ENCODE measurements at regions of chr10 and their contacts with region 1.

Region 1: GRCh38 chr10:22597138-22597537 is 117.2 kb downstream of the PIP4K2A start:
- DNase-seq: peak; percentile 74
- ATAC-seq: peak; percentile 67
- H3K4me3 ChIP-seq: no peak overlapping the region
- H3K4me3 Mint-ChIP-seq: peak overlapping the region; percentile 79
- H3K27ac ChIP-seq: peak overlapping the region; percentile 63 to 91
- H3K27ac Mint-ChIP-seq: peak overlapping the region; percentile 90
- H3K4me1 ChIP-seq: peaks cover 86% of the 10 kb centered on the region in 2 donors
- H3K4me1 Mint-ChIP-seq: peaks cover 85% of the 10 kb centered on the region
- H3K27me3 ChIP-seq: no peaks in the 10 kb centered on the region
- H3K27me3 Mint-ChIP-seq: no peaks in the 10 kb centered on the region
- CTCF ChIP-seq: no peak

Region 2: GRCh38 chr10:22527520-22527919 is 69.6 kb before region 1 on chr10:
- CTCF ChIA-PET with region 1: no interaction called
- POLR2A ChIA-PET with region 1: no interaction called
- intact Hi-C with region 1: no loop called
- DNase-seq: no peak
- ATAC-seq: no peak
- H3K4me3 ChIP-seq: no peak overlapping the region
- H3K4me3 Mint-ChIP-seq: no peak overlapping the region
- H3K27ac ChIP-seq: no peak overlapping the region
- H3K27ac Mint-ChIP-seq: no peak overlapping the region
- H3K4me1 ChIP-seq: no peaks in the 10 kb centered on the region
- H3K4me1 Mint-ChIP-seq: no peaks in the 10 kb centered on the region
- H3K27me3 ChIP-seq: no peaks in the 10 kb centered on the region
- H3K27me3 Mint-ChIP-seq: no peaks in the 10 kb centered on the region
- CTCF ChIP-seq: no peak

Region 3: DNA sequence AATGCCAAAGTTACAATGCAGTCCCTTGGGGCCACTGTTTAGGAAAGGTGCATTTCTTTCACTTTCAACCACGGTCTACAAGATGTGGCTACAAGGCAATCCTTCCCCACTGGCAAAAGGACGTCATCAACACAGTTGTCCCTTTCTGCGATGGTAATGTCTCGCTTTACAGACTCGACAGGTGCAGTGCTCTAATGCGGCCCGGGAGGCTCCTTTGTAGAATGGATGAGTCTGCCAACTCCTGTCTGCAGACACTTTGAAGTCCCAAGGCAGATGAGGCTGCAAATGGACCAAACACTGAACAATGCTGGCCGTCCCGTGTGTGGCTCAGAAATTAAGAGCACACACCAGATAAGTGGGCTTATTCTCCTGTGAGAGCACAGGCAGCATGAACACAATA is 16.4 kb before region 1 on chr10:
- CTCF ChIA-PET with region 1: interaction called, 35 read pairs
- POLR2A ChIA-PET with region 1: interaction called, 6 read pairs
- intact Hi-C with region 1: no loop called
- DNase-seq: no peak
- ATAC-seq: no peak
- H3K4me3 ChIP-seq: no peak overlapping the region
- H3K4me3 Mint-ChIP-seq: no peak overlapping the region
- H3K27ac ChIP-seq: no peak overlapping the region
- H3K27ac Mint-ChIP-seq: peak overlapping the region; percentile 37
- H3K4me1 ChIP-seq: no peaks in the 10 kb centered on the region
- H3K4me1 Mint-ChIP-seq: peaks cover 5% of the 10 kb centered on the region
- H3K27me3 ChIP-seq: no peaks in the 10 kb centered on the region
- H3K27me3 Mint-ChIP-seq: no peaks in the 10 kb centered on the region
- CTCF ChIP-seq: no peak

Region 4: DNA sequence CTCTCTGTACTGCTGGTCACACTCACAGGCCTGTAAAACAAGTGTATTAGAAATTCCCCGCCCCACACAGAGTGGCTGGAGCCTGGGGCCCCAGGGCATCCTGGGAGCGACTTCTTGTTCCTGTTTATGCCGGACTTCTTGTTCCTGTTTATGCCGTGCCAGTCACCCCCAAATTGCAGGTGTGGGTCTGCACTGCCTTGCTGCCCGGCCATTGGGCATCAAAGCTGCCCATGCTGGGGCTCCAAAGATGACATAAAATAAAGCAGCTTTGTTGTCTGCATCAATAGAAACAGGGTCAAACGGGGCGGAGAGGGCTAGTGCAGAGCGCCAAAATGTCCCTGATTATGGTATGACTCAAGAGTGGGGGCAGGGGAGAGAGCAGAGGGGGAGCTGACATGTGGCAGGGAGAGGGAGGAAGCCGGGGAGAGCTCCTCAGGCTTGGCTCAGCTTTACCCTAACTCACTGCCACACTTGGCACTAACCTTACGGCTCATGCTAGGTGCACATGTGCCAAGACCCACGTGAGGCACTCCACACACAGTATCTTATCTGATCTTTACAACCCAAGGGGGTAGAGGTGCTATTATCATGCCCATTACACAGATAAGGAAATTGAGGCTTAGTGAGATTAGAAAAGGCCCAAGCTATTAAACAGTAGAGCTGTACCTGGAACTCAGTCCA is 18.8 kb after region 1 on chr10:
- CTCF ChIA-PET with region 1: interaction called, 8 read pairs
- POLR2A ChIA-PET with region 1: interaction called, 6 read pairs
- intact Hi-C with region 1: loop called (anchors 2 kb)
- DNase-seq: peak; percentile 72
- ATAC-seq: peak; percentile 75
- H3K4me3 ChIP-seq: peak overlapping the region in 3 of 5 experiments; percentile 7 to 45 (median 36)
- H3K4me3 Mint-ChIP-seq: peak overlapping the region; percentile 83
- H3K27ac ChIP-seq: peak overlapping the region; percentile 71 to 87
- H3K27ac Mint-ChIP-seq: peak overlapping the region; percentile 94
- H3K4me1 ChIP-seq: peaks cover 76 to 79% of the 10 kb centered on the region in 2 donors
- H3K4me1 Mint-ChIP-seq: peaks cover 95% of the 10 kb centered on the region
- H3K27me3 ChIP-seq: no peaks in the 10 kb centered on the region
- H3K27me3 Mint-ChIP-seq: no peaks in the 10 kb centered on the region
- CTCF ChIP-seq: no peak

Region 5: DNA sequence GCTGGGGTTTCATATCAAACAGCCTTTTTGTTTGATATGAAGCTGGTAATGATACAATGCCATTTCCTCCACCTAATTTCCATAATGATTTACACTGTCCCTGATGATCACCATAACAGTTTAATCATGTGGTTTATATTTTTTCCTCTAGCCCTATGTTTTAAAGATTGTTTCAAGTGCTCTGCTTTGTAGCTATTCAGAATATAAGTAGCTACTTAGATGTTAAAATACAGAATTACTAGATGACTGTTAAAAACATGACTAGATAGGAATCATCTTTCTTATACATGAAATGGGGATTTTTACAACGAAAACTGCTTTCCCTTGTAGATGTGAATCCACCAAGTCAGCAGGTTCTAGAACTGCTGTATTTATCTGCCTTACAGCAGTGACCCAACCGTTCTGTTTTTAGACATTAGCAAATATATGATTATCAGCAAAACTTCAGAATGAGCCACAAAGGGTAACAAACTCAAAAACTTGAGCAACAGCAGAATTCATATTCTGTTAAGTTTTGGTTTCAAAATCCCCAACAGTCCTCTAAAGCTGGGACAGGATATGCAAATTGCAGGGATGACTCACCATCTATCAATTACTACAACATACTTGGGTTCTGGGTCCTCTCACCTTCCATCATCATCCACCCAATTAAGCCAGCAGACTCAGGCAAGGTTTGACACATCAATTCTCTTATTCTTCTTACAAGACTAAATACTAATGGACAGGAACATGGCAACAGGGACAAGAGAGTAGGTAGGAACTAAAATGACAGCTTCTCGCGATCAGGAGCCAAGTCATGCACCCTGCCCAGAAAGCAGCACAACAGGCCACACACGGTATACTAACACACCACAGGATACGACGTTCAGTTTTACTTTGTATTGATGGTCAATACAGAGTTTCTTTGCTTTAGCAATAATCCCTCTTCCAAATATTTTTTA is 33.4 kb after region 1 on chr10:
- CTCF ChIA-PET with region 1: interaction called, 4 read pairs
- POLR2A ChIA-PET with region 1: interaction called, 5 read pairs
- intact Hi-C with region 1: loop called (anchors 5 kb)
- DNase-seq: peak; percentile 78
- ATAC-seq: peak; percentile 83
- H3K4me3 ChIP-seq: peak overlapping the region; percentile 7 to 48 (median 30)
- H3K4me3 Mint-ChIP-seq: peak overlapping the region; percentile 77
- H3K27ac ChIP-seq: peak overlapping the region; percentile 87 to 88
- H3K27ac Mint-ChIP-seq: peak overlapping the region; percentile 90
- H3K4me1 ChIP-seq: peaks cover 64 to 81% of the 10 kb centered on the region in 2 donors
- H3K4me1 Mint-ChIP-seq: peaks cover 92% of the 10 kb centered on the region
- H3K27me3 ChIP-seq: no peaks in the 10 kb centered on the region
- H3K27me3 Mint-ChIP-seq: no peaks in the 10 kb centered on the region
- CTCF ChIP-seq: no peak

Region 6: DNA sequence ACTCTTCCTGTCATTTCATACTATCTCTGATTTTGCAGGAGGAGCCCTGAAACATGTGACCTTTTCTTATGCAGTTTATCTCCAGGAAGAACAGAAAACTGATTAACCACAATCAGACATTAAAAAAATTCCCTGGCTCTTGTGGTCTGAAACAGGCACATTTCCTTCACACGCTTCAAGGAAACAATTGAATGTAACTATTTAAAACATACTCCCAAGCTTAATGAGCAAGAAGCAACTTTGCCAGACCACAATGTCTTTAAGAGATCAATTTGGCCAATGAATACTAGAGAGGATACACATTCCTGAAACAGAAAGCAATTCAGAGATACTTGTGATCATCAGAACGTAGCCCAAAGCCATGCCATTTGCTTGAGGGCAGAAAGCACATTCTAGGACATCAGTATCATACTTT is 51.4 kb after region 1 on chr10:
- CTCF ChIA-PET with region 1: interaction called, 5 read pairs
- POLR2A ChIA-PET with region 1: no interaction called
- intact Hi-C with region 1: loop called (anchors 2 kb)
- DNase-seq: no peak
- ATAC-seq: no peak
- H3K4me3 ChIP-seq: no peak overlapping the region
- H3K4me3 Mint-ChIP-seq: peak overlapping the region; percentile 58
- H3K27ac ChIP-seq: peak overlapping the region in 1 of 2 donors; percentile 46
- H3K27ac Mint-ChIP-seq: peak overlapping the region; percentile 56
- H3K4me1 ChIP-seq: peaks cover 86 to 88% of the 10 kb centered on the region in 2 donors
- H3K4me1 Mint-ChIP-seq: peaks cover 89% of the 10 kb centered on the region
- H3K27me3 ChIP-seq: no peaks in the 10 kb centered on the region
- H3K27me3 Mint-ChIP-seq: no peaks in the 10 kb centered on the region
- CTCF ChIP-seq: no peak

Region 7: DNA sequence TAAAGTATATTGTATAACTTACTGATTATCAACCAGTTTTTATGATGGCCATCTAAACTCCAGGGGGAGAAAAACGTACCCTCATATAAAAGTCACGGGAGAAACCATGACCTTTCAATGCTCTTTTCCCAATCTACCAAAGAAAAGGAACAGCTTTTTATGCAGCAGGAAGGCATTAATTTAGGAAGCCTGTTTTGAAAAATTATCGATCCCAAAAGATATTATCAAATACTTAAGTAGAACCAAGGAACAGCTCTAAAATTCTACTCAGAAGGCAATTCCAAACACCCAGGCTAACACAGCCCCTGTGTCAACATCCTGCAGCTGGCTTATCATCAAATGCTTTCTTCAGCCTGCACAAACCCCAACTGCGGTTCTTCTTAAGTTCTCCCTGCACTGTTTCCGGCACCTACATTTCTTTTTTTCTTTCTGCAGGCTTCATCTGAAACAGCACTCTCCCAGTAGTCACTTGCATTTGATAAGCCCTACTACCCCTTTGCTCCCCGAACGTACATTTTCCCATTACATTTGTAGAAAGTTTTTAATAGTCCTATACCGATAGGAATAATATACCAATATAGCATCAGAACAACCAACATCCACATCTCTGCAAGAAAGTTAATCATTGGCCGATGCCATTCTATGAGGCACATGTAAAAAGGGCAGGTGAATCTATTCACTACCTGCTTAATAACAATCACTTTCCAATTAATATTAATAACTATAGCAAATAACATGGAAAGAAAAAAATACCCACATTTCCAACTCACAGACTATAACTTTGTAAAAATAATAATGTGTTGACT is 69.4 kb after region 1 on chr10:
- CTCF ChIA-PET with region 1: no interaction called
- POLR2A ChIA-PET with region 1: no interaction called
- intact Hi-C with region 1: loop called (anchors 5 kb)
- DNase-seq: peak; percentile 45
- ATAC-seq: peak; percentile 76
- H3K4me3 ChIP-seq: peak overlapping the region in 3 of 5 experiments; percentile 5 to 30 (median 15)
- H3K4me3 Mint-ChIP-seq: peak overlapping the region; percentile 76
- H3K27ac ChIP-seq: peak overlapping the region in 1 of 2 donors; percentile 59
- H3K27ac Mint-ChIP-seq: peak overlapping the region; percentile 56
- H3K4me1 ChIP-seq: peaks cover 22 to 38% of the 10 kb centered on the region in 2 donors
- H3K4me1 Mint-ChIP-seq: peaks cover 62% of the 10 kb centered on the region
- H3K27me3 ChIP-seq: no peaks in the 10 kb centered on the region
- H3K27me3 Mint-ChIP-seq: no peaks in the 10 kb centered on the region
- CTCF ChIP-seq: no peak